ENCODE measurements at regions of chr2 and their contacts with region 1.

Region 1: GRCh38 chr2:209208211-209208610 is 215.6 kb upstream of the MAP2 start:
- DNase-seq: peak; percentile 17
- ATAC-seq: no peak
- H3K4me3 ChIP-seq: peak overlapping the region; percentile 16 to 25; a peak in 3 of 4 replicates
- H3K27ac ChIP-seq: no peak overlapping the region
- H3K4me1 ChIP-seq: peaks cover 2% of the 10 kb centered on the region; the same call in 1 of the 2 replicates
- H3K27me3 ChIP-seq: no peaks in the 10 kb centered on the region
- CTCF ChIP-seq: peak; percentile 75; the same call in 1 of the 2 replicates

Region 2: DNA sequence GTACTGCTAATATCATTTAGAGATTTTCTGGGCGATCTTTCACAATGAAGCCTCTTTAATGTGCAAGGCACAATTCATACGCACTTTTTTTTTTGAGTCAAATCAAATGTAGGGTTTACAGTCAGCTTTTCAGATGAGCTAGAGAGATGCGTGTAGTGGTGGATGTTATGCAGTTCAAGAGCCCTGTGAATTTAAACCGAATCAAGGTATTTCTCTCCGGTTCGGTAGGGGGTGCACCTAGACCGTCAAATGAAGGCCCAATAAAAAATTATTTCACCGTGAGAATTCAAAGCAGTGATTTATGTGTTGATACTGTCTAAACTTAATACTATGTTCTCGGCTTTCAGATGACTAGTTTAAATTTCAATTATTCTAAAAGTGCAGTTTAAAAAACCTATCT is 800.5 kb before region 1 on chr2:
- CTCF ChIA-PET with region 1: no interaction called
- POLR2A ChIA-PET with region 1: no interaction called
- in situ Hi-C with region 1: no loop called
- intact Hi-C with region 1: loop called (anchors 5 kb)
- DNase-seq: no peak
- ATAC-seq: peak; percentile 88
- H3K4me3 ChIP-seq: no peak overlapping the region
- H3K27ac ChIP-seq: no peak overlapping the region
- H3K4me1 ChIP-seq: no peaks in the 10 kb centered on the region
- H3K27me3 ChIP-seq: peaks cover 49% of the 10 kb centered on the region
- CTCF ChIP-seq: peak; percentile 68

Region 3: DNA sequence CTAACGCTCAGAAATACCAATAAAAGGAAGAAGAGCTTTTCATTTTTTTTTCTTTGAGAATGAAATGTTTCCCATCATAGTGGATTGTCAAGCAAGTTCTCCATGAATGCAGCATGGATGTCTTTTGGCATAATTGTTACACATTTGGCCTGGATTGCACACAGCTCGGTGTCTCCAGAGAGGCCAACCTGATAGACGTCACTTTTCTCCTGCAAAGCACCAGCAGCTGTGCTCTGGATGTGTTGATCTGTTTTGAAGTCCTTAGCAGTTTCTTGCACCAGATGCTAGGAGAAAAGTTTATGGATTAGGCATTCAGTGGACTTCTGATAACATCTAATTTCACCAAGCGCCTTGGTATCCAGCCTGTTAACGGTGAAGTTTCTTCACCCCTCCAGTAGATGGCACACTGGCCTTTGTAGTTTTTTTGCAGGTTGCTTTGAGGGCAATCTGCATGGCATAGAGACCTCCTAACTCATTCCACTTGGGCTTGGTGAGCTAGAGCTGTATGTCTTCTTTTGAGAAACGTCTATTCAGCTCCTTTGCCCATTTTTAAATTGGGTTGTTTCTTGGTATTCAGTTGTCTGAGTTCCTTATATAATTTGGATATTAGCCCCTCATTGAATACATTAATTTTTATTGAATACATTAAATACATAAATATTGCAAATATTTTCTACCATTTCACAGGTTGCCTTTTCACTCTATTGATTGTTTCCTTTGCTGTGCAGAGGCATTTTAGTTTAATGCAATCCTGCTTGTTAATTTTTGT is 741.9 kb before region 1 on chr2:
- CTCF ChIA-PET with region 1: no interaction called
- POLR2A ChIA-PET with region 1: no interaction called
- in situ Hi-C with region 1: no loop called
- intact Hi-C with region 1: loop called (anchors 5 kb)
- DNase-seq: peak; percentile 22
- ATAC-seq: peak; percentile 84
- H3K4me3 ChIP-seq: no peak overlapping the region
- H3K27ac ChIP-seq: no peak overlapping the region
- H3K4me1 ChIP-seq: no peaks in the 10 kb centered on the region
- H3K27me3 ChIP-seq: no peaks in the 10 kb centered on the region; the same call in 1 of the 2 replicates
- CTCF ChIP-seq: peak; percentile 85

Region 4: GRCh38 chr2:208820014-208820688 is 388.1 kb before region 1 on chr2:
- CTCF ChIA-PET with region 1: no interaction called
- POLR2A ChIA-PET with region 1: no interaction called
- in situ Hi-C with region 1: no loop called
- intact Hi-C with region 1: loop called (anchors 2 kb)
- DNase-seq: no peak
- ATAC-seq: peak; percentile 77
- H3K4me3 ChIP-seq: no peak overlapping the region
- H3K27ac ChIP-seq: no peak overlapping the region
- H3K4me1 ChIP-seq: no peaks in the 10 kb centered on the region
- H3K27me3 ChIP-seq: no peaks in the 10 kb centered on the region
- CTCF ChIP-seq: peak; percentile 35; the same call in 1 of the 2 replicates

Region 5: DNA sequence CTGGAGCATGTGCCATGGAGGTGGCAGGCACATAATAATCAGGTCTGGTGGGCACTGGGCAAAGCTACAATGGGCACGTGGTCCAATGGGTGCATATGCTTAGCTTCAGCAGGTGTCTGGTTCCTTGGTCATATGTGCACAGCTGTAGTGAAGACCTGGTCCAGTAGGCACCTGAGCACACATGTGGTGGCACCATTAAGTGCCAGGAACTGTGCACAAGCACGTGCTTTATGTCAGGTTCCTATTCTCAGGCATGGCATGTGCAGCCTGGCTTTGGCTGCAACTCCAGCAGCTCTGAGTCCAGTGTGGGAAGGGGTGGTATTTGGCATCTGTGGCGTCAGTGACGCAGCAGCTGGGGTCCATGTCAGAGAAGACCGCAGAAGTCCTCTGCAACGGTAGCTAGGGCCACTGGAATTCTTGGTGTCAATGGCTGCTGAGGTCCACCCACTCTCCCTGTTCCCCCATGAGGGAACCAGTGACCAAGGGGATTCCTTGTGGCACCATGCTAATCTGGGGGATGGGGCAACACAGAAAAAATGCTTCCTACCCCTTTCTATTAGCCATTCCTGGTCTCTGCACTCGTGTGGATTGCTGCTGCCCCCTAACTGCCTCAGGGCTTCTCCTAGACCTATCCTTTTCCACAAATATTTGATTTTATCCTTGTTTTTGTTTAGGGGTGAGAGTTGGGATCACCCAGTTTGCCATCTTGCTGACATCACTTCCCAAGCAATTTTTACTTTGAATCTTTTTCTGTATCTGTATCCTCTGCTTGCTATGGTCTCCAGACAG is 47.2 kb before region 1 on chr2:
- CTCF ChIA-PET with region 1: no interaction called
- POLR2A ChIA-PET with region 1: no interaction called
- in situ Hi-C with region 1: no loop called
- intact Hi-C with region 1: no loop called
- DNase-seq: no peak
- ATAC-seq: no peak
- H3K4me3 ChIP-seq: no peak overlapping the region
- H3K27ac ChIP-seq: no peak overlapping the region
- H3K4me1 ChIP-seq: no peaks in the 10 kb centered on the region
- H3K27me3 ChIP-seq: no peaks in the 10 kb centered on the region
- CTCF ChIP-seq: no peak

Region 6: DNA sequence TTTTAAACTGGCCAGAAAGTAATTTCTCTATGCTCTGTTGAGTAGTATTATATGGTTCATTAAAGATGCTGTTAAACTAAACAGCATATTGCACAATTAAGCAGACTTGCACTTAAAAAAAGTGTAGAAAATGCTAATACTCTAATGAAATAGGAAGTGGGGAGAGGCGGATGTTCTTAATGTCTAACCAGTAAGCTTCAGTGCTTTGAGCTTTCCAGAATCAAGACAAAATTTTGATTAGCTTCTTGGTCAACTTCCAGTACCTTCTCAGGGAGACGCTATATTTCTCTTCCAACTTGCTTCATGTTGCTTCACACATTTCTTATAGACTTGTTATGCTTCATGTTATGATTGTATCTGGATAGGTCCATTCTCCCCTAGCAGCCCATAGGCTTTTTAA is 304.8 kb after region 1 on chr2:
- CTCF ChIA-PET with region 1: no interaction called
- POLR2A ChIA-PET with region 1: no interaction called
- in situ Hi-C with region 1: no loop called
- intact Hi-C with region 1: no loop called
- DNase-seq: no peak
- ATAC-seq: no peak
- H3K4me3 ChIP-seq: no peak overlapping the region
- H3K27ac ChIP-seq: no peak overlapping the region
- H3K4me1 ChIP-seq: no peaks in the 10 kb centered on the region
- H3K27me3 ChIP-seq: no peaks in the 10 kb centered on the region
- CTCF ChIP-seq: no peak